Psoas muscle (tissue), 8 donors: ENCODE measurements at regions of chr1 and their contacts with region 1.

Region 1: GRCh38 chr1:43786960-43787359 is 79.6 kb downstream of the ST3GAL3 start:
- DNase-seq: peak; percentile 33 to 62
- ATAC-seq: peak; percentile 68 to 81 (median 72)
- H3K4me3 ChIP-seq: no peak overlapping the region
- H3K27ac ChIP-seq: peak overlapping the region; percentile 20
- H3K4me1 ChIP-seq: peaks cover 40% of the 10 kb centered on the region
- H3K27me3 ChIP-seq: no peaks in the 10 kb centered on the region
- CTCF ChIP-seq: no peak

Region 2: GRCh38 chr1:43822040-43822439 is 35.1 kb after region 1 on chr1:
- intact Hi-C with region 1: loop called in 1 of 2 experiments (anchors 5 kb)
- DNase-seq: no peak
- ATAC-seq: peak; percentile 94 to 99 (median 97)
- H3K4me3 ChIP-seq: no peak overlapping the region
- H3K27ac ChIP-seq: peak overlapping the region; percentile 54
- H3K4me1 ChIP-seq: peaks cover 20% of the 10 kb centered on the region
- H3K27me3 ChIP-seq: no peaks in the 10 kb centered on the region
- CTCF ChIP-seq: no peak

Region 3: DNA sequence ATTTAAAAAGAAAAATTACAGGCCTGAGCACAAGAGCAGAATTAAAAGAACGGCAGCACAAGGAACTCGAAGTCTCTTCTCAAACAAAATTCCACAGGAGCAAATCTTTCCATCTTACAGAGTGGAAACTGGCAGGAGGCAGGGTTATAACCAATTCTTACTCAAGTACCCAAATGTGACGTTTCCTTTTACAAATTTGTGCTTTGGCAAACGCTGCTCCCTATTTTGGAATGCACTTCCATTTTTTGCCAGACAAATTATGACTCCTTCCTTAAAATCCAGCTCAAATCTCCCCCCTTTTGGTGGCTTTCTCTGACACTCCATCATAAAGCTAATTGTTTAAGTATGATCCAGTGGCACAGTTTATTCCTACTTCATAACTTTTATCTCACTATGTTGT is 560.3 kb after region 1 on chr1:
- intact Hi-C with region 1: no loop called
- DNase-seq: no peak
- ATAC-seq: no peak
- H3K4me3 ChIP-seq: no peak overlapping the region
- H3K27ac ChIP-seq: no peak overlapping the region
- H3K4me1 ChIP-seq: peaks cover 24% of the 10 kb centered on the region
- H3K27me3 ChIP-seq: no peaks in the 10 kb centered on the region
- CTCF ChIP-seq: no peak